HEK293 (cell line): ENCODE measurements at regions of chr15 and their contacts with region 1.

Region 1: GRCh38 chr15:74322181-74323076 is 45.0 kb downstream of the CYP11A1 start:
- H3K4me3 ChIP-seq: no peak overlapping the region
- H3K27ac ChIP-seq: no peak overlapping the region
- H3K4me1 ChIP-seq: peaks cover 7% of the 10 kb centered on the region
- CTCF ChIP-seq: peak; percentile 96

Region 2: DNA sequence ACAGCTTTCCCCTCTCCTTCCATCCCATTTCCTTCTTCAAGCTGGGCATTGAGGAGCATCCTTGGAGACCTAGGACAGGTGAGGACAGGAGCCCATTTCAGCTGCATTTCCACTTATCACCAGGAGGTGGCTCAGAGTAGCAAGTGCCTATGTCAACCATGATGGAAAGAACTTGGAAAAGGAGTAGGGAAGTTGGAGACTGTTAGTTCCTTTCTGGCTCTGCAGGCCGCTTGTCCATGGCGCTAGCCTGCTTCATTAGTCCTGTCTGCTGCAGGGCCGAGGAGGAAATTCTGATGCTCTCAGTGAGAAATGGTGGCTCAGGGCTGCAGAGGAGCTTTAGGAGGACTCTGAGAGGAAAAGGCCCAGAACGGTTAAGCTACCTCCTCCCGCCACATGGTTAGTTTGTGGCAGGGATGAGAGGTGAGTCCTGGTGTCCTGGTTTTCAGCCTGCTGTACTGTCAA is 645.3 kb before region 1 on chr15:
- CTCF ChIA-PET with region 1: no interaction called
- POLR2A ChIA-PET with region 1: no interaction called
- H3K4me3 ChIP-seq: no peak overlapping the region
- H3K27ac ChIP-seq: no peak overlapping the region
- H3K4me1 ChIP-seq: no peaks in the 10 kb centered on the region
- CTCF ChIP-seq: no peak

Region 3: DNA sequence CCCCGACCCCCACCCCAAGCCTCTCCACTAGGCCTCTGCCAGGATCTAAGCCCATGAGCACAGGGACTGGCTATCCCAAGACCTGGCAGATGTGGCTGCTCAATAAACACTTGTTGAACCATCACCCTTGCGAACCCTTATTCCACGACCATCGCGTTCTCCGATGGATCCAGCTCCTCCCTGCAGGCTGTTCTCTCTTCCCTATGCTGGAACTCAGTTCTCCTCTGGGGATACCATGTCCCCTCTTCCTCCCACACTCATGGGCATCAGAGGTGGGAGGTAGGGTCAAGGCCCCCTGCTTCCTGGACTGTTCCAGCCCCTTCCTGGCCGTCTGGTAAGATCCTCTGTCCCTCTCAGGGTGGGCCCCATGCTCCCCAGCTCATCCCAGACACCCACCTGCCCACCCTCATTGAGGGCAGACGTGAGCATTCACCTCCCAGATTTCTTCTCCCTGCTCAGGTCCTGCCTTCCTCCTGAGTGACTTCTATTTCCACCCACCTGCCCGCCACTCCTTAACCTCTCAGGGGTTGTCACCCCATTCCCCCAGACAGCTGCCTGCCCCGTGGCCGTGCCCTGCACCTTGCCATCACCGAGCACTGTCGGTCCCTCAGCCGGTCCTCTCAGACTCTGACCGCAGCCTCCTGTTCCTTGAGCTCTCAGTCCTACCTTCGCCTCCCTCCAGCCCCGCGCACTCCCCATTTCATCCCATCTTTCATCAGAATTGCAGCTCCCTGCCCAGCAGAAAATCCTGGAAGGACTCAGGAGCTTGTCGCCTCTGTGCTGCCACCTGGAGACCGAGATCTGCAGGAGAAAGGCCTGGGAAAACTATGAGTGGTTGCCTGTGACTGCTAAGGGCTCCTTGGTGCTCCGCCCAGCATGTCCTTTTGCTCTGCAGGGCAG is 285.9 kb before region 1 on chr15:
- CTCF ChIA-PET with region 1: interaction called, 15 read pairs
- POLR2A ChIA-PET with region 1: no interaction called
- H3K4me3 ChIP-seq: no peak overlapping the region
- H3K27ac ChIP-seq: no peak overlapping the region
- H3K4me1 ChIP-seq: no peaks in the 10 kb centered on the region; the same call in 1 of the 2 replicates
- CTCF ChIP-seq: no peak; the same call in 1 of the 2 replicates

Region 4: GRCh38 chr15:74062671-74063070 is 259.8 kb before region 1 on chr15:
- CTCF ChIA-PET with region 1: interaction called, 21 read pairs
- POLR2A ChIA-PET with region 1: no interaction called
- H3K4me3 ChIP-seq: no peak overlapping the region
- H3K27ac ChIP-seq: no peak overlapping the region
- H3K4me1 ChIP-seq: no peaks in the 10 kb centered on the region
- CTCF ChIP-seq: no peak

Region 5: GRCh38 chr15:74144153-74144775 is 178.2 kb before region 1 on chr15:
- CTCF ChIA-PET with region 1: interaction called, 11 read pairs
- POLR2A ChIA-PET with region 1: no interaction called
- H3K4me3 ChIP-seq: no peak overlapping the region
- H3K27ac ChIP-seq: no peak overlapping the region
- H3K4me1 ChIP-seq: no peaks in the 10 kb centered on the region
- CTCF ChIP-seq: no peak

Region 6: GRCh38 chr15:74340139-74340538 is 17.7 kb after region 1 on chr15:
- CTCF ChIA-PET with region 1: interaction called, 14 read pairs
- POLR2A ChIA-PET with region 1: no interaction called
- H3K4me3 ChIP-seq: no peak overlapping the region
- H3K27ac ChIP-seq: no peak overlapping the region
- H3K4me1 ChIP-seq: no peaks in the 10 kb centered on the region
- CTCF ChIP-seq: no peak